Caco-2 (cell line): ENCODE measurements at regions of chr6 and their contacts with region 1.

Region 1: DNA sequence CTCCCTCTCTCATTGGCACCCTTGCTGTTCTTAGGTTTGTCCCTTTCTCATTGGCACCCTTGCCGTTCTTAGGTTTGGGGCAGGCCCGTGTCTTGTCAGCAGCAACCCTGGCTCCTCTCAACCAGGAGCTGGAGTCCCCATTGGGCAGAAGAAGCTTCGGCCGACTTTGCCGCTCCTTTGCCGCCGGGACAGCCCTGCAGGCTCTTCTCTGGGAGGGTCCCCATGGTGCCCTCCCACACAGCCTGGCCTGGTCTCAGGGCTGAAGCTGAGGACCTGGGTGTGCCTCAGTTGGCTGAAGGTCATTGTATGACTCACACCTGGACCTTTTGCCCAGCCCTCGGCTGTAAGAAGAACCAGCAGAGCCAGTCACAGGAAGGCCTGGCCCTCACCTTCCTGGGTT is 59.6 kb downstream of the PPP1R14C start:
- DNase-seq: no peak
- H3K4me3 ChIP-seq: no peak overlapping the region
- H3K4me3 Mint-ChIP-seq: no peak overlapping the region
- H3K27ac Mint-ChIP-seq: peak overlapping the region; percentile 87
- H3K4me1 ChIP-seq: peaks cover 32% of the 10 kb centered on the region
- H3K4me1 Mint-ChIP-seq: peaks cover 26% of the 10 kb centered on the region
- H3K27me3 ChIP-seq: no peaks in the 10 kb centered on the region
- H3K27me3 Mint-ChIP-seq: no peaks in the 10 kb centered on the region
- CTCF ChIP-seq: no peak

Region 2: DNA sequence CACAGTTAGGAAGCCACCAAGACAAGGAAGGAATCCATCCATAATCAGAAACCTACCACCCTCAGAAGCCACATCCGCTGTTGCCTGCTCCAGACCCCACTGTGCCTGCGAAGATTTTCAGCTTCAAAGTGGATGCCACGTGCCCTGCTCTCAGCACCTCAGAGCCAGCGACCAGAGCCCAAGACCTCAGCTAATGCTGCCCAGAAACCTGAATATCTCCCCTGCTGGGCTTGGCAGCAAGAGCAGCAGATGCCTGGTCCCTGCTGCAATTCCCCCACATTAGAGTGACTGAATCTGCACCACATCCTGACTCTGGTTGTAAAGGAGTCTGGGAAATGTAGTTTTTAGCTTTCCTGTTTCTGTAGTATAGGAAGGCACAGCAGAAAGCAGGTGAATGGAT is 122.8 kb before region 1 on chr6:
- CTCF ChIA-PET with region 1: interaction called, 9 read pairs
- POLR2A ChIA-PET with region 1: no interaction called
- intact Hi-C with region 1: loop called (anchors 1 kb)
- DNase-seq: no peak
- H3K4me3 ChIP-seq: no peak overlapping the region
- H3K4me3 Mint-ChIP-seq: no peak overlapping the region
- H3K27ac Mint-ChIP-seq: no peak overlapping the region
- H3K4me1 ChIP-seq: no peaks in the 10 kb centered on the region
- H3K4me1 Mint-ChIP-seq: no peaks in the 10 kb centered on the region
- H3K27me3 ChIP-seq: no peaks in the 10 kb centered on the region; the same call in 1 of the 2 replicates
- H3K27me3 Mint-ChIP-seq: peaks cover 7% of the 10 kb centered on the region
- CTCF ChIP-seq: no peak

Region 3: GRCh38 chr6:150169609-150170008 is 32.8 kb before region 1 on chr6:
- CTCF ChIA-PET with region 1: interaction called, 3 read pairs
- POLR2A ChIA-PET with region 1: no interaction called
- intact Hi-C with region 1: loop called (anchors 1 kb)
- DNase-seq: no peak
- H3K4me3 ChIP-seq: no peak overlapping the region
- H3K4me3 Mint-ChIP-seq: no peak overlapping the region
- H3K27ac Mint-ChIP-seq: no peak overlapping the region
- H3K4me1 ChIP-seq: no peaks in the 10 kb centered on the region
- H3K4me1 Mint-ChIP-seq: no peaks in the 10 kb centered on the region
- H3K27me3 ChIP-seq: no peaks in the 10 kb centered on the region
- H3K27me3 Mint-ChIP-seq: no peaks in the 10 kb centered on the region
- CTCF ChIP-seq: no peak